ENCODE measurements at regions of chr9 and their contacts with region 1.

Region 1: GRCh38 chr9:116661037-116661954 is 25.8 kb upstream of the TRIM32 start:
- DNase-seq: peak in 1 of 10 donors; percentile 30
- H3K4me3 ChIP-seq: no peak overlapping the region
- H3K27ac ChIP-seq: no peak overlapping the region
- H3K27me3 ChIP-seq: no peaks in the 10 kb centered on the region
- CTCF ChIP-seq: peak in 55 of 56 donors; percentile 37 to 91 (median 78)

Region 2: GRCh38 chr9:116156621-116157314 is 504.5 kb before region 1 on chr9:
- intact Hi-C with region 1: loop called (anchors 5 to 10 kb)
- DNase-seq: peak in 5 of 10 donors; percentile 16 to 58 (median 31)
- H3K4me3 ChIP-seq: peak overlapping the region in 36 of 59 donors; percentile 1 to 63 (median 24)
- H3K27ac ChIP-seq: peak overlapping the region in 3 of 59 donors; percentile 35 to 45 (median 35)
- H3K27me3 ChIP-seq: peaks cover 0 to 42% (median 19%) of the 10 kb centered on the region in 45 donors
- CTCF ChIP-seq: no peak

Region 3: GRCh38 chr9:116420993-116421538 is 240.2 kb before region 1 on chr9:
- intact Hi-C with region 1: no loop called
- DNase-seq: no peak
- H3K4me3 ChIP-seq: no peak overlapping the region
- H3K27ac ChIP-seq: no peak overlapping the region
- H3K27me3 ChIP-seq: no peaks in the 10 kb centered on the region
- CTCF ChIP-seq: no peak

Region 4: GRCh38 chr9:116979456-116979855 is 318.2 kb after region 1 on chr9:
- intact Hi-C with region 1: no loop called
- DNase-seq: no peak
- H3K4me3 ChIP-seq: no peak overlapping the region
- H3K27ac ChIP-seq: no peak overlapping the region
- H3K27me3 ChIP-seq: no peaks in the 10 kb centered on the region
- CTCF ChIP-seq: no peak